ENCODE measurements at regions of chr3 and their contacts with region 1.

Region 1: GRCh38 chr3:126070146-126070545 is 13.8 kb downstream of the SLC41A3 start:
- DNase-seq: no peak
- H3K4me3 ChIP-seq: no peak overlapping the region
- H3K27ac ChIP-seq: no peak overlapping the region
- H3K4me1 ChIP-seq: no peaks in the 10 kb centered on the region
- H3K27me3 ChIP-seq: no peaks in the 10 kb centered on the region
- CTCF ChIP-seq: no peak

Region 2: DNA sequence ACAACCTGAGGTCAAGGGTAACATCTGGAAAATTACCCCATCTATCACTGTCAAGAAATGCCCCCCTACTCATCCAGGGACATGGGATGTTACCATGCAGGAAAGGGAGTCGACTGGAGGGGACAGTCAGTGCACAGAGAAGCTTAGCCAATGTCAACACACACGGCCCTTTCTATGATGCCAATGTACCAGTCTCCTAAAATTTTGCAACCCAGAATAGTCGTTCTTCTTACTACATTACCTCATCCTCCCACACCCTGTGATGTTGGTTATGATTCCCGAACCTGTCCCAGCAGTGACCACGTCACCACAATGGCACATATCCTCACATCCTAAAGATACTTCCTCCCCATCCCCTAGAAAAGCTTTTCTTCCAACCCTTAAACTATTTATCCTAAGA is 564.7 kb after region 1 on chr3:
- CTCF ChIA-PET with region 1: interaction called, 23 read pairs
- POLR2A ChIA-PET with region 1: no interaction called
- intact Hi-C with region 1: no loop called
- DNase-seq: no peak
- H3K4me3 ChIP-seq: no peak overlapping the region
- H3K27ac ChIP-seq: no peak overlapping the region
- H3K4me1 ChIP-seq: no peaks in the 10 kb centered on the region
- H3K27me3 ChIP-seq: no peaks in the 10 kb centered on the region
- CTCF ChIP-seq: no peak